Panc1 (cell line): ENCODE measurements at regions of chr10 and their contacts with region 1.

Region 1: DNA sequence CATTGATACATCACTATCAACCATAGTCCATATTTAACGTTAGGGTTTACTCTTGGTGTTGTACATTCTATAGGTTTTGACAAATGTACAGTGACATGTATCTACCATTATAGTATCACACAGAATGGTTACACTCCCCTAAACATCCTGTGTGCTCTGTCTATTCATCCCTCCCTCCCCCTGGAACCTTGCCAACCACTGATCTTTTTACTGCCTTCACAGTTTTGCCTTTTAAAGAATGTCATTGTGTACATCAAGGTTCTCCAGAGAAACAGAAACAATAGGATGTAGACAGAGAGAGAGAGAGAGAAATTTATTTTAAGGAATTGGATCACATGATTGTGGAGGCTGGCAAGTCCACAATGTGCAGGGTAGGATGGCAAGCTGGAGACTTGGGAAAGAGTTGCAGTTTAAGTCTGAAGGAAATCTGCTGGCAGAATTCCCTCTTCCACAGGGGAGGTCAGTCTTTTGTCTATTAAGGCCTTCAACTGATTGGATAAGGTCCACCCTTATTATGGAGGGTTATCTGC is 45.1 kb upstream of the CCNJ start:
- DNase-seq: no peak
- ATAC-seq: no peak
- H3K4me3 ChIP-seq: no peak overlapping the region
- H3K27ac ChIP-seq: no peak overlapping the region
- H3K4me1 ChIP-seq: no peaks in the 10 kb centered on the region
- H3K27me3 ChIP-seq: no peaks in the 10 kb centered on the region
- CTCF ChIP-seq: no peak

Region 2: GRCh38 chr10:95860166-95860940 is 138.0 kb before region 1 on chr10:
- CTCF ChIA-PET with region 1: no interaction called
- POLR2A ChIA-PET with region 1: no interaction called
- in situ Hi-C with region 1: no loop called
- intact Hi-C with region 1: no loop called
- DNase-seq: no peak
- ATAC-seq: no peak
- H3K4me3 ChIP-seq: no peak overlapping the region
- H3K27ac ChIP-seq: no peak overlapping the region
- H3K4me1 ChIP-seq: no peaks in the 10 kb centered on the region
- H3K27me3 ChIP-seq: no peaks in the 10 kb centered on the region
- CTCF ChIP-seq: no peak

Region 3: DNA sequence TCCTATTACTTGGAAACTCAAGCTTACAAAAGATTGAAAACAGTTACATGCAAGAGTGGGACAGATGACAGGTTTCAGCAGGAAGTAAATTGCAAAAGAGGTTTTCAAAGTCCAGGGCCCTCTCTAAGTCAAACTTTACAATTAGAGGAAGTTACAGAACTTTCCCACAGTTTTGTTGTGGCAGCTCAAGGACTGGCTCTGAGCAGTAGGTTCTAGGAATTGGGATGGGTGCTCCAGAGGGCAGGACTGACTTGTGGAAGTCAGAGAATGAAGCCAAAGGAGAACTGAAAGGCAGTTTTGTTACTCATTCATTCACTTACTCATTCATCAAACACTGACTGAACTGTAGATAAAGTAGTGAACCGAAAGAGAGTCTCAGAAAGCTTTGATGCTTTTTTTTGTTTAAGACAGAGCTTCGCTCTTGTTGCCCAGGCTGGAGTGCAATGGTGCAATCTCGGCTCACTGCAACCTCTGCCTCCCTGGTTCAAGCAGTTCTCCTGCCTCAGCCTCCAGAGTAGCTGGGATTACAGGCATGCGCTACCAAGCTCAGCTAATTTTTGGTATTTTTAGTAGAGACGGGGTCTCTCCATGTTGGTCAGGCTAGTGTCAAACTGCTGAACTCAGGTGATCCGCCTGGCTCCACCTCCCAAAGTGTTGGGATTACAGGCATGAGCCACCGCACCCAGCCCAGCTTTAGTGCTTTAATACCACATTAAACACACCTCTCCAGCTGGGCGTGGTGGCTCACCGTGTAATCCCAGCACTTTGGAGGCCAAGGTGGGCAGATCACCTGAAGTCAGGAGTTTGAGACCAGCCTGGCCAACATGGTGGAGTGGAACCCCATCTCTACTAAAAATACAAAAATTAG is 21.7 kb before region 1 on chr10:
- CTCF ChIA-PET with region 1: no interaction called
- POLR2A ChIA-PET with region 1: interaction called, 10 read pairs
- in situ Hi-C with region 1: no loop called
- intact Hi-C with region 1: no loop called
- DNase-seq: no peak
- ATAC-seq: no peak
- H3K4me3 ChIP-seq: no peak overlapping the region
- H3K27ac ChIP-seq: no peak overlapping the region
- H3K4me1 ChIP-seq: no peaks in the 10 kb centered on the region
- H3K27me3 ChIP-seq: peaks cover 5% of the 10 kb centered on the region; the same call in 1 of the 2 replicates
- CTCF ChIP-seq: no peak

Region 4: GRCh38 chr10:96814264-96814663 is 815.9 kb after region 1 on chr10:
- CTCF ChIA-PET with region 1: no interaction called
- POLR2A ChIA-PET with region 1: no interaction called
- in situ Hi-C with region 1: no loop called
- intact Hi-C with region 1: loop called (anchors 5 kb)
- DNase-seq: no peak
- ATAC-seq: no peak
- H3K4me3 ChIP-seq: no peak overlapping the region
- H3K27ac ChIP-seq: no peak overlapping the region
- H3K4me1 ChIP-seq: no peaks in the 10 kb centered on the region
- H3K27me3 ChIP-seq: peaks cover 22% of the 10 kb centered on the region
- CTCF ChIP-seq: no peak